Activated T-helper 1 cell treated with anti-CD3 and anti-CD28 coated beads, Interleukin-12 subunit alpha, Interleukin-12 subunit beta, Interleukin-2, Interleukin-4 antibody, amounts not matched to agents 30 ng/mL and 10 ng/mL and 1 ng/mL, durations not matched to agents 14 hours and 24 hours and 36 hours (primary cell): ENCODE measurements at regions of chr16 and their contacts with region 1.

Region 1: GRCh38 chr16:4802659-4803287 is 340 bp upstream of the ROGDI start:
- DNase-seq: peak; percentile 89
- H3K4me3 Mint-ChIP-seq: peak overlapping the region; percentile 80
- H3K27ac Mint-ChIP-seq: no peak overlapping the region
- H3K4me1 Mint-ChIP-seq: peaks cover 9% of the 10 kb centered on the region
- H3K27me3 Mint-ChIP-seq: no peaks in the 10 kb centered on the region

Region 2: GRCh38 chr16:4693296-4693955 is 109.3 kb before region 1 on chr16 and contains the start of gene NUDT16L1:
- intact Hi-C with region 1: loop called (anchors 2 kb)
- DNase-seq: peak; percentile 98
- H3K4me3 Mint-ChIP-seq: peak within 1 kb of the TSS; percentile 86
- H3K27ac Mint-ChIP-seq: peak within 1 kb of the TSS; percentile 84
- H3K4me1 Mint-ChIP-seq: no peaks in the 10 kb centered on the region
- H3K27me3 Mint-ChIP-seq: no peaks in the 10 kb centered on the region
- total RNA-seq, gene NUDT16L1: 39.9 and 41.9 TPM in 2 replicates

Region 3: DNA sequence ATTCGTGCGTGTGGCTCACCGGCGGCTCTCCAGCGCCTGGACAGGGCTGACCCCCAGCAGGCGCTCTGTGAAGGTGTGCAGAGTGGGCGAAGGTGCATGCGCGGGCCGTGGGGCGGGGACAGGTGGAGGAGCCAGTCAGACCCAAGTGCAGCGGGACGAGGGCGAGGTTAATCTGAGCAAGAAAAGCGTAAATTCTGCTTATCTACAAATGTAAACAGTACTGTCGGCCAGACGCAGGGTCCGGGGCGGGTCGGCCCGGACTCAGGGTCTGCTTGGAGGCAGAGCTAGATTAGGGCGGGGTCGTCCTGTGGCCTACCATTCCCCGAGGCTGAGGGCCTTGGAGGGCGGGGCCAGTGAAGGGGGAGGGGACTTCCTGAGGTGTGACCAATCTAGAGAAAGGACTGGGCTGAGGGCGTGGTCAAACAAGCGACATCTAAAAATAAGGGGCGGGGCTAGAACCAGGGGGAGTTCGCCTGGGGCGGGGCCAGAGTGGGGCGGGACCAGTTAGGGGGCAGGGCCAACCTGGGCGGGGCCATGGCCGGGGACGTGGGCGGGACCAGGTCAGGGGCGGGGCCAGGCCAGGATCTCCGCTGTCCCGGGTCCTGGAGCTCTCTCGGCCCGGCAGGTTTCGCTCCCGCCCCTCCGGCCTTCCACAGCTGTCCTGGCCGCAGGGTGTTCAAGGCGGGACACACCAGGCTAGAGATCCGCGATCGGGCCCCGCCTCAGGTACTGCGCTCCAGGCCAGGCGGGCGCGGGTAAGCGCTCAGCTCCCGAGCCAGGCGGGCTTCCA is 155.1 kb after region 1 on chr16 and contains the start of gene SEC14L5:
- intact Hi-C with region 1: loop called (anchors 1 kb)
- DNase-seq: peak; percentile 90
- H3K4me3 Mint-ChIP-seq: peak within 1 kb of the TSS; percentile 85
- H3K27ac Mint-ChIP-seq: peak within 1 kb of the TSS; percentile 26
- H3K4me1 Mint-ChIP-seq: peaks cover 22% of the 10 kb centered on the region
- H3K27me3 Mint-ChIP-seq: peaks cover 21% of the 10 kb centered on the region
- total RNA-seq, gene SEC14L5: not detected in 2 replicates

Region 4: DNA sequence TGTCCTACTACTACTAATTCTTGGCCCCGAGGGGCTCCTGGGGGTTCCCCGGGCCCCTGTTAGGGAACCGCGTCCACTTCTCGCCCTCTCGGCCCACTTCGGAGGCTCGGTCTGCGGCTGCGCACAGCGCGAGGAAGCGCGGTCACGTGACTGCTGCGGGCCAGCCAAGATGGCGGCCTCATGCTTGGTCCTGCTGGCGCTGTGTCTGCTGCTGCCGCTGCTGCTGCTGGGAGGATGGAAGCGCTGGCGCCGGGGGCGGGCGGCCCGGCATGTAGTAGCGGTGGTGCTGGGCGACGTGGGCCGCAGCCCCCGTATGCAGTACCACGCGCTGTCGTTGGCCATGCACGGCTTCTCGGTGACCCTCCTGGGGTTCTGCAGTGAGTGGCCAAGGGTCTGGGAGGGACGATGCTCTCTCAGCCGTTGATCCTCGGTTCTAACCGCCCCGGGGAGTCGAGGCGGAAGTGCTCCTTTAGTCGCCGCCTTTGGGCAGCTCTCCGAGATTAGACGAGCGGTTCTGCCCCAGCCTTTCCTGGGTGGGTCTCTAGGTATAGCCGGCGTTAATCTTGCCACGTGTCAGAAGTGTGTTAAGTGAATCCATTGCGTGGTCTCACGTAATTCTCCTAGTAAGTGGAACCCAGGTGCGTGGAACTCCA is 269.0 kb after region 1 on chr16 and contains the start of gene ALG1:
- intact Hi-C with region 1: loop called (anchors 2 kb)
- DNase-seq: peak; percentile 88
- H3K4me3 Mint-ChIP-seq: peak within 1 kb of the TSS; percentile 93
- H3K27ac Mint-ChIP-seq: peak within 1 kb of the TSS; percentile 97
- H3K4me1 Mint-ChIP-seq: peaks cover 24% of the 10 kb centered on the region
- H3K27me3 Mint-ChIP-seq: peaks cover 6% of the 10 kb centered on the region
- total RNA-seq, gene ALG1: 40.0 and 41.4 TPM in 2 replicates